BJ (cell line): ENCODE measurements at regions of chr7 and their contacts with region 1.

Region 1: GRCh38 chr7:140517546-140518369 is 38.5 kb upstream of the MKRN1 start:
- DNase-seq: peak; percentile 49
- H3K4me3 ChIP-seq: no peak overlapping the region
- H3K27me3 ChIP-seq: no peaks in the 10 kb centered on the region
- CTCF ChIP-seq: peak; percentile 91

Region 2: GRCh38 chr7:140506788-140507464 is 10.8 kb before region 1 on chr7:
- CTCF ChIA-PET with region 1: interaction called, 17 read pairs
- POLR2A ChIA-PET with region 1: no interaction called
- DNase-seq: peak; percentile 13
- H3K4me3 ChIP-seq: no peak overlapping the region
- H3K27me3 ChIP-seq: no peaks in the 10 kb centered on the region
- CTCF ChIP-seq: peak; percentile 34

Region 3: DNA sequence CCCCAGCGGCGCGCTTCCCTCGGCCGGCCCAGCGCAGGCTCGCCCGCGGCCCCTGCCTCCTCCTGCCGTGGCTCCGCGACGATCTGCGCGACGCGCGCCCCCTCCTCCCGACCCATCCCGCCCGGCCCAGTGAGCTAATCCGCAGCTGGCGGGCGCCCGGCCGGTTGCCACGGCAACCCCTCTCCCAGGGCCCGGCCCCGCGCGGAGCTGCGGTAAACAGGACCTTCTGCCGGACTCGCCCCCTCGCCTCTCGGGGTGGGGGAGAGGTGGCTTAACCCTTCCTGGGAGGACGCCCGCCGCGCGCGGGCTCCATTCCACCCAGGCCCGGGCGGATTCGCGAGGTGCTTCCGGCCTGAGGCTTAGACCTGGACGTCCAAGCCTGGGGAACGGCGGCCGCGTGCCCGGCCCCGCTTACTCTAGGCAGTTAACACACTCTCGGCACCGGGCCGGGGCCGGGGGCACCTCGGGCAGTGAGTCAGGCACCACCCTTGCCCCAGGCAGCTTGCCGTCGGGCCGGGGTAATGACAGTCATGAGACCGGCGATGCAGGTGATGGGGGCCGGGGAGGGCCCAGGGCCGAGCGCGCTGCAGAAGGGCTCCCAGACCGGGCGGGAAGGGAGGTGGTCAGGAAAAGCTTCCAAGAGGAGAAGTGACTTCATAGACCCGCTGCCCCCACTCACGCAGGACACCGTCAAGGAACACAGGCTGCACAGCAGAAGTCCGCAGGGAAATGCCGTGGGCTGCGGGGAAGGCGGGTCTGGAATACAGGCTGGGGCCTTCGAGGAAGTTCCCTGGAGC is 123.2 kb after region 1 on chr7 and contains the start of gene DENND2A:
- CTCF ChIA-PET with region 1: interaction called, 14 read pairs
- POLR2A ChIA-PET with region 1: no interaction called
- DNase-seq: no peak
- H3K4me3 ChIP-seq: peak within 1 kb of the TSS; percentile 66
- H3K27me3 ChIP-seq: no peaks in the 10 kb centered on the region
- CTCF ChIP-seq: no peak
- polyA plus RNA-seq, gene DENND2A: 2.9 and 3.3 TPM in 2 replicates

Region 4: DNA sequence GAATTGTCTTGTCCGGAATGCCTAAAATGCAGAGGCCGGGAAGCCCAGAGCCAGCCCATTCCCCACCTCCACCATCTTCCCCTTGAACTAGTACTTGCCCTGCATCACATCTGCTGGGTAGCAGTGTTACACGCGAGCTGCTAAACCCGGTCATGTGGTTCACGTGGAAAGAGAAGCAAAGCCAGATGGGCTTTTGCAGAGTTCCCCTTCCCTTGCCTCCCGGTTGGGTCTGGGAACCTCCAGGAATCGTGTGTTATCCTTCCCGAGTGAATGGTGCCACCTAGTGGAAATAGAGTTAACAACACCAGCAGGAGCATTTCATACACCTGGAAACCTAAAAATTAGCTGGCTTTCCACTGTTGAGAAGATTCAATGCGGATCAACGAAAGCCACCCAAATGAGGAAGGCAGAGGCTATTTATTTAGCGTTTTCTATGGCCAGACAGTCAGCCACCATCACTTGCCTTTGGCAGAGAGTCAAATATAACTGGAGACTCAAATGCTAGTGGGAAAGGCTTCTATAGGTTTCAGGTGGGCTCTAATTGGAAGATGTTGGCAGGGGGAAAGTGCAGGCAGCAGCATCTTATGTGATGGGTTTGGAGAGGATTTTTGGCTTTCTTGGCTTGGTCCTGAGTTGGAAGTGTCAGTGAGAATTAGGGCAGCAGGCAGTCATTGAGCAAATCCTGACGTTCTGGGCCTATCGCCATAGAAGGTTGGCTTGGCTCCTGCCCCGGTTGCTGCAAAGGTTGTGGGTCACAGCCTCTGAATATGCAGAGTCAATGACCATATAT is 135.8 kb after region 1 on chr7:
- CTCF ChIA-PET with region 1: interaction called, 103 read pairs
- POLR2A ChIA-PET with region 1: no interaction called
- DNase-seq: no peak
- H3K4me3 ChIP-seq: no peak overlapping the region
- H3K27me3 ChIP-seq: no peaks in the 10 kb centered on the region
- CTCF ChIP-seq: peak; percentile 84

Region 5: GRCh38 chr7:140661121-140661520 is 143.4 kb after region 1 on chr7:
- CTCF ChIA-PET with region 1: interaction called, 28 read pairs
- POLR2A ChIA-PET with region 1: no interaction called
- DNase-seq: no peak
- H3K4me3 ChIP-seq: no peak overlapping the region
- H3K27me3 ChIP-seq: no peaks in the 10 kb centered on the region; the same call in 1 of the 2 replicates
- CTCF ChIP-seq: peak; percentile 28; the same call in 1 of the 2 replicates

Region 6: GRCh38 chr7:140673063-140673773 is 155.5 kb after region 1 on chr7:
- CTCF ChIA-PET with region 1: interaction called, 11 read pairs
- POLR2A ChIA-PET with region 1: interaction called, 4 read pairs
- DNase-seq: no peak
- H3K4me3 ChIP-seq: peak overlapping the region; percentile 65
- H3K27me3 ChIP-seq: no peaks in the 10 kb centered on the region
- CTCF ChIP-seq: no peak